Activated CD8-positive, alpha-beta T cell treated with anti-CD3 and anti-CD28 coated beads, Interleukin-2, amount 10 ng/mL, durations not matched to agents 7 days and 5 days (primary cell): ENCODE measurements at regions of chr2 and their contacts with region 1.

Region 1: DNA sequence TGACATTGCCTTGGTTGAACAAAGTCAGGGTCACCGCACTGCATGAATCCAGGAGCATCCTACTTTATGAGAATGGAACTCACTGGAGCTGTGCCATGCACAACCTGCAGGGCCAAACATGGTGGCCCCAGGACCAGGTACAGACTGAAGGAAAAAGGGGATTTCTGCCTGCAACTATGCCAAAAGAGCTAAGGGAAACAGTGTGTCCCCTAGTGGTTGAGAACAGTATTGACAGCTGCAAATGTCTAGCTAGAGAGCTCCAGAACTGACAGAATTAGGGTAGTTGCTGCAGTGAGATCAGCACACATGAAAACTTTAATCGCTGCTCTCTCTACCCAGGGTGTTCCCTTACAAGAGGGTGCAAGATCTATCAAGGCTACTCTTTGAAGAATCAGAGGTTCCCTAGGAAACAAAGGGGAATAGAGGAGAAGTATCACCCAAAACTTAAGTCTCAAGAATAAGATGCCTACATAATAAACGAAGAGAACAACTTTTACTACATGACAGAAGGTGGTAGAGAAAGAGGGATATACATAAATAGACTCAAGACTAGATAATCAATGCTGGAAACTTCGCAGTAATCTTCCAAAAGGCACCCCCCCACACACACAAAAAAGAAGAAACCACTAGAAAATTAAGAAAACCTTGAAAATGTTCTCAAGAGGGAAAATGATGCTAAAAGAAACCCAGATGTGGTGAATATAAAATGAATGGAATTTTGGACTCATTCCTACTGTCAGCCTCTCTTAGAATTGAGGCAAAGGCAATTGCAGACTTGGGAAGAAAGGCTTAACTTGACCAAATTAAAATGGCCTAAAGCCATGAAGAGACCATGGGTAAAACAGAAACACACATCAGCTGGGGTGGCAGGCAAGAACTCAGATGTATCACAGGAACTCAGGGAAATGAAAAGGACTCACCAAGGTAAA is 43.6 kb upstream of the IHH start:
- DNase-seq: peak; percentile 29
- ATAC-seq: peak; percentile 58
- H3K4me3 Mint-ChIP-seq: no peak overlapping the region
- H3K27ac Mint-ChIP-seq: no peak overlapping the region
- H3K4me1 Mint-ChIP-seq: peaks cover 18% of the 10 kb centered on the region
- H3K27me3 Mint-ChIP-seq: no peaks in the 10 kb centered on the region

Region 2: GRCh38 chr2:219057709-219058540 is 46.4 kb before region 1 on chr2:
- CTCF ChIA-PET with region 1: interaction called, 25 read pairs
- POLR2A ChIA-PET with region 1: no interaction called
- DNase-seq: peak; percentile 82
- ATAC-seq: peak; percentile 92
- H3K4me3 Mint-ChIP-seq: peak overlapping the region; percentile 42
- H3K27ac Mint-ChIP-seq: no peak overlapping the region
- H3K4me1 Mint-ChIP-seq: peaks cover 21% of the 10 kb centered on the region
- H3K27me3 Mint-ChIP-seq: peaks cover 62% of the 10 kb centered on the region

Region 3: GRCh38 chr2:219065484-219065883 is 38.9 kb before region 1 on chr2:
- CTCF ChIA-PET with region 1: interaction called, 10 read pairs
- POLR2A ChIA-PET with region 1: no interaction called
- DNase-seq: no peak
- ATAC-seq: no peak
- H3K4me3 Mint-ChIP-seq: no peak overlapping the region
- H3K27ac Mint-ChIP-seq: no peak overlapping the region
- H3K4me1 Mint-ChIP-seq: peaks cover 4% of the 10 kb centered on the region
- H3K27me3 Mint-ChIP-seq: peaks cover 40% of the 10 kb centered on the region

Region 4: DNA sequence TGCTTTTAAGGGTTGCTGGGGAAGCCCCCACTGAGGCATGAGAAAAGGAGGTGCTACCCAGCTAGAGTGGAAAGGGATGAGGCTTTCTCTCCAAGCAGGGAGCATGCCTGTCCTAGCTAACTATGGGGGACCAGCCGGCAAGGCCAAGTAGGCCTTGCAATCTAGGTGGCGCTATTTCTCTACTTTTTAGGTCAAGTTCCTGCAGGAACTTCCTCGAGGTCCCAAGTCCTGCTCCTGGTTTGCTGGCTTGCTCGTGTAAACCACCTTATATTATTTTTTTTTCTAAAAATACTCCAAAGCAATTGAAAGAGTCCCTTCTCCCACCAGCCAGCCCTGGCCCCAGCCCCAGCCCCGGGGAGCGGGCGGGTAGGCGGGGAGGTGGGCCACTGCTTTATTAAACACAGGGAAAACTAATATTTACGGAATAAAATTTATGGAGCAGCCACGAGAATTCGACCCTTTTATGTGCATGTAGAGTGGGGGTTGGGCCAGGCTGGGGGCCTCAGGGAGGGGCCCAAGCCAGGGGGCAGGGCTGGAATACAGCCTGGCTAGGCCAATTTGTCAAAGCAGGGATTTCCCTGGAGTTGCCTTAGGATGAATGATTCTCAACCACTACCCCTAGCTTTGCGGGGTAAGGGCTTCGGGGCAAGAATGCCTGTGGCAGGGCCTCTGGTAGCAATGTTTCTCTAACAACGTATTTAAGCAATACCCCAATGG is 30.8 kb before region 1 on chr2:
- CTCF ChIA-PET with region 1: interaction called, 45 read pairs
- POLR2A ChIA-PET with region 1: interaction called, 3 read pairs
- DNase-seq: peak; percentile 28
- ATAC-seq: peak; percentile 42
- H3K4me3 Mint-ChIP-seq: no peak overlapping the region
- H3K27ac Mint-ChIP-seq: no peak overlapping the region
- H3K4me1 Mint-ChIP-seq: no peaks in the 10 kb centered on the region
- H3K27me3 Mint-ChIP-seq: no peaks in the 10 kb centered on the region

Region 5: GRCh38 chr2:219086196-219086595 is 18.2 kb before region 1 on chr2:
- CTCF ChIA-PET with region 1: interaction called, 17 read pairs
- POLR2A ChIA-PET with region 1: no interaction called
- DNase-seq: no peak
- ATAC-seq: no peak
- H3K4me3 Mint-ChIP-seq: no peak overlapping the region
- H3K27ac Mint-ChIP-seq: no peak overlapping the region
- H3K4me1 Mint-ChIP-seq: peaks cover 19% of the 10 kb centered on the region
- H3K27me3 Mint-ChIP-seq: no peaks in the 10 kb centered on the region